HCT116 (cell line): ENCODE measurements at regions of chr6 and their contacts with region 1.

Region 1: GRCh38 chr6:81752138-81752920 is at the start of gene TENT5A:
- DNase-seq: peak; percentile 75
- ATAC-seq: peak; percentile 79
- H3K4me3 ChIP-seq: peak within 1 kb of the TSS; percentile 84 to 87
- H3K27ac ChIP-seq: peak within 1 kb of the TSS; percentile 82
- H3K4me1 ChIP-seq: peaks cover 4 to 24% of the 10 kb centered on the region in 2 experiments; a peak in 2 of 4 replicates
- H3K27me3 ChIP-seq: no peaks in the 10 kb centered on the region
- CTCF ChIP-seq: no peak
- POLR2A ChIP-seq: peak; percentile 45
- RAD21 ChIP-seq: peak; percentile 2
- total RNA-seq, gene TENT5A: 11.2 TPM

Region 2: DNA sequence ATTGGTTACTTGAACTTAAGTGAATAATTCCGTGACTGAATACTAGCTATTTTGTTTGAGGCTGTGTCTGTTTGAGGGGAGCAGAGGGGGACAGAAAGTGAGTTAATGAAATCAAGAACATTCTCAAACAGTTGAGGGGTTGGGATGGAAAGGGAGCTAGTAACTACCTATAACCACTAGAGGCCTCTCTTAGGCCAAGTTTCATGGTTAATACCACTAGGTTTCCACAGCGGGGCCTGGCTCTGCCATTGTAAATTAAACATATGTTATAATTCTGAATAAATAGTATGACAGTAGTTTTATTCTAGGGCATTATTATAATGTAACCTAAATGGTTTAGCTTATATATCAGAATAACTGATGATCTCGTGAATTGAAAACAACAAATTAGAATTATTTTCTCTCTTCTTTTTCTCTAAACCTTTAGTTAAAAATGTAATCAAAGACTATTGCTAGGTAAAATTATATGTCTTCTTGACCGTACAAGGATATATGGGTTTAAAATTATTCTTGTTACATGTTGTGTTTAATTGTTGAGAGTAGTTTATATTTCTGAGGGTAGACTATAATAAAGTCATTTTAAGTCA is 1537.8 kb before region 1 on chr6:
- CTCF ChIA-PET with region 1: interaction called, 10 read pairs
- POLR2A ChIA-PET with region 1: no interaction called
- RAD21 ChIA-PET with region 1: no interaction called
- intact Hi-C with region 1: loop called (anchors 1 kb)
- DNase-seq: peak; percentile 22
- ATAC-seq: peak; percentile 95
- H3K4me3 ChIP-seq: no peak overlapping the region
- H3K27ac ChIP-seq: no peak overlapping the region
- H3K4me1 ChIP-seq: no peaks in the 10 kb centered on the region
- H3K27me3 ChIP-seq: no peaks in the 10 kb centered on the region
- CTCF ChIP-seq: peak; percentile 39 to 76 (median 75); a peak in 4 of 6 replicates
- POLR2A ChIP-seq: no peak
- RAD21 ChIP-seq: peak; percentile 72

Region 3: DNA sequence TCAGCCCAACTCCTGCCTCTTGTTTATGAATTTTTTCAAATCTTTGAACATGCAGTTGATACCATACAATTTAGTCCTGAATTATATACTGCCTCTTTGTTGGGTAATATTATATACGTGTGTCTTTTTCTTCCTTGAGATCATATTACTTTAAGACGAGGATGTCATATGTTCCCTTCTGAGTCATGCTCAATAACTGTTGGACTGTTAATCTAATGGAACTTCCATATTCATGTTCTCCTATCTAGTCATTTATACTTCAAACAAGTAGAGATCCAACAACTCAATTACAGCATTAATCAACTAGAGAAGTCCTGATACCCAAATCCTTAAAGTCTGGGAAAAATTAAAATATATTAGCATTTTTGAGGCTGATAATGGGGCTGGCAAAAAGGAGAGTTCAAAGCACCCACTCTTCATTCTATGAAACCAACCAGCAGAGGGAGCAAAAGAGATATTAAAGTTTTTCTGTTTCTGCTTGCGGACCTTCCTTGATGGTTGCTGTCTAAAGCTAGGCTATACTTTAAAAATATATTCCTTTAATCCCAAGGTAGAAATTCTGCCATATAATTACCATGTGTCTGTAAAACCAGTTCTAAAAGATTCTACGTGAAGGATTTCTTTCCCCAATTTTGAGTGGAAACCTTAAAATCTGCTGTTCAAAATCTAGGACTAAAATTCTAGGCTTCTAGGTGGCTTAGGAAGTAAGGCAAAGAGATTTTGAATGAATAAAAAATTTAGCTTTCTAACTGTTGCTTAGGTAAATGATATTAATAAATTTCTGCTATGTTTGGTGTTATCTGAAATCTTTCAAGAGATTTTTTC is 1147.0 kb before region 1 on chr6:
- CTCF ChIA-PET with region 1: interaction called, 5 read pairs
- POLR2A ChIA-PET with region 1: no interaction called
- RAD21 ChIA-PET with region 1: no interaction called
- intact Hi-C with region 1: loop called (anchors 5 kb)
- DNase-seq: peak; percentile 42
- ATAC-seq: peak; percentile 89
- H3K4me3 ChIP-seq: no peak overlapping the region
- H3K27ac ChIP-seq: no peak overlapping the region
- H3K4me1 ChIP-seq: peaks cover 0 to 20% of the 10 kb centered on the region in 2 experiments; a peak in 2 of 4 replicates
- H3K27me3 ChIP-seq: no peaks in the 10 kb centered on the region
- CTCF ChIP-seq: peak; percentile 55 to 74 (median 55); a peak in 5 of 6 replicates
- POLR2A ChIP-seq: no peak
- RAD21 ChIP-seq: peak; percentile 79

Region 4: DNA sequence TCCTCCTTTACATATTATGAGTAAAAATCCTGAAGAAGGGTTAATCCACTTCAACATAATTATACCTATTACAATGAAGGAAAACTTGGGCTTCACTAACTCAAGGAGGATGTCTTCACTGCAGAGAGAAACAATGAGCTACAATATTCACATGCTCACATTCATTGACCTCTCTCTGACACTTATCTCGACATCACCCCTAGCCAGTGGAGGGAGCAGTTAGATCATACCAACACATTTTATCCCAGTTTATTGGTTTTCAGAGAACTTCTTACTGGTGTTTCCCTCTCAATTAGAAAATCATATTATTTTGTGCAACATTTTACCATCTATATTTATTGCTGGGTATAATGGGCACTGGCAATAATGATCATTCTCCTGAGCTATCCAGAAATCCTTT is 646.3 kb before region 1 on chr6:
- CTCF ChIA-PET with region 1: no interaction called
- POLR2A ChIA-PET with region 1: no interaction called
- RAD21 ChIA-PET with region 1: no interaction called
- intact Hi-C with region 1: loop called (anchors 10 kb)
- DNase-seq: no peak
- ATAC-seq: no peak
- H3K4me3 ChIP-seq: no peak overlapping the region
- H3K27ac ChIP-seq: no peak overlapping the region
- H3K4me1 ChIP-seq: no peaks in the 10 kb centered on the region
- H3K27me3 ChIP-seq: no peaks in the 10 kb centered on the region
- CTCF ChIP-seq: no peak
- POLR2A ChIP-seq: no peak
- RAD21 ChIP-seq: peak; percentile 39

Region 5: DNA sequence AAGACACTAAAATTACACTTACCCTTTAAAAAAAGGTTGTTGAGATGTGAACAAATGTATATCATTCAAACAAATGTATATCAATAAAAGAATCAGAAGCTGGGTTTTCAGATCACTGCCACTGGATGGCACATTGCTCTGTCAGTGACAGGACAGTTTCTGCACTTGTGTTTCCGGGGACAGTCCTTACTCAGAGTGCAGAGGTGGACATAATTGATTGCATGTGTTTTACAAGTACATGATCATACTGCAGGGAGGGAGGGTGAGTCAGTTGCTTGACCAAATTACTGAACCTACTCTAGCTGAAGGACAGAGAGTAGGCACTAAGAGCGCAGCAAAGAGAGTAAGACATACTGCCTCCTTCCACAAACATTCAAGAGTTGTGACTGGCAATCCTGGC is 302.1 kb before region 1 on chr6:
- CTCF ChIA-PET with region 1: interaction called, 3 read pairs
- POLR2A ChIA-PET with region 1: interaction called, 6 read pairs
- RAD21 ChIA-PET with region 1: interaction called in 1 of 2 experiments, 3 read pairs
- intact Hi-C with region 1: loop called (anchors 1 kb)
- DNase-seq: peak; percentile 74
- ATAC-seq: peak; percentile 60
- H3K4me3 ChIP-seq: no peak overlapping the region
- H3K27ac ChIP-seq: no peak overlapping the region
- H3K4me1 ChIP-seq: peaks cover 5 to 32% of the 10 kb centered on the region in 2 experiments; a peak in 3 of 4 replicates
- H3K27me3 ChIP-seq: no peaks in the 10 kb centered on the region
- CTCF ChIP-seq: peak; percentile 21 to 39 (median 34); a peak in 3 of 6 replicates
- POLR2A ChIP-seq: no peak
- RAD21 ChIP-seq: peak; percentile 67

Region 6: GRCh38 chr6:82006027-82006738 is 253.9 kb after region 1 on chr6:
- CTCF ChIA-PET with region 1: interaction called, 3 read pairs
- POLR2A ChIA-PET with region 1: no interaction called
- RAD21 ChIA-PET with region 1: no interaction called
- intact Hi-C with region 1: loop called (anchors 5 kb)
- DNase-seq: no peak
- ATAC-seq: peak; percentile 90
- H3K4me3 ChIP-seq: no peak overlapping the region
- H3K27ac ChIP-seq: no peak overlapping the region
- H3K4me1 ChIP-seq: no peaks in the 10 kb centered on the region
- H3K27me3 ChIP-seq: no peaks in the 10 kb centered on the region
- CTCF ChIP-seq: peak; percentile 45 to 75 (median 73); a peak in 5 of 6 replicates
- POLR2A ChIP-seq: no peak
- RAD21 ChIP-seq: peak; percentile 83